HAP-1 (cell line): ENCODE measurements at regions of chr5 and their contacts with region 1.

Region 1: GRCh38 chr5:74640450-74640953 is at the start of gene ENC1:
- DNase-seq: peak; percentile 80 to 84
- H3K4me3 ChIP-seq: peak within 1 kb of the TSS; percentile 54
- H3K4me1 ChIP-seq: peaks cover 9% of the 10 kb centered on the region
- H3K27me3 ChIP-seq: no peaks in the 10 kb centered on the region

Region 2: DNA sequence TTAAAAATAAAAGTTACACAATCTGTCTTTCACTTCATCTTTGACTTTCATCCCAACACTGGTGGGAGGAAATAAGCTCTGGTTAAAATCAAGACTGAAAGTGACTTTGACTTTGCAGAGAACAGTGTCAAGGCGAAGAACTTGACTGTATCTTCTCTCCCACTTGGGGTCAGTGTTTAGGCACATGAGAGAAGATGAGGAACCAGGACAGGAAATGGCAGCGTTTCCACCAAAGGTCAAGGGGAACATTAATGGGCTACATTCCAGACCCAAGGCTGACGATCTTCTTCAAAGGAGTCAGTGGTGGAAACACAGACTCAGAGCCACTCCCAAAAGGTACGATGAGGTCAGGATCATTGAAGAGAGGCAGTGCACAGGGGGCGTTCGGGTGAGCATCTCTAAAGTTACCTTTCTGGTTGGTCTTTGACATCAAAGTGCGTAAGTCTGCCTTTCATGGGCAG is 605.0 kb before region 1 on chr5:
- in situ Hi-C with region 1: loop called (anchors 25 kb)
- DNase-seq: peak in 1 of 2 experiments; percentile 14
- H3K4me3 ChIP-seq: no peak overlapping the region
- H3K4me1 ChIP-seq: peaks cover 15% of the 10 kb centered on the region
- H3K27me3 ChIP-seq: peaks cover 44% of the 10 kb centered on the region

Region 3: GRCh38 chr5:74482990-74483389 is 157.5 kb before region 1 on chr5:
- in situ Hi-C with region 1: no loop called
- DNase-seq: no peak
- H3K4me3 ChIP-seq: no peak overlapping the region
- H3K4me1 ChIP-seq: peaks cover 5% of the 10 kb centered on the region; the same call in 1 of the 2 replicates
- H3K27me3 ChIP-seq: peaks cover 4% of the 10 kb centered on the region; the same call in 1 of the 2 replicates